ENCODE measurements at regions of chr15 and their contacts with region 1.

Region 1: DNA sequence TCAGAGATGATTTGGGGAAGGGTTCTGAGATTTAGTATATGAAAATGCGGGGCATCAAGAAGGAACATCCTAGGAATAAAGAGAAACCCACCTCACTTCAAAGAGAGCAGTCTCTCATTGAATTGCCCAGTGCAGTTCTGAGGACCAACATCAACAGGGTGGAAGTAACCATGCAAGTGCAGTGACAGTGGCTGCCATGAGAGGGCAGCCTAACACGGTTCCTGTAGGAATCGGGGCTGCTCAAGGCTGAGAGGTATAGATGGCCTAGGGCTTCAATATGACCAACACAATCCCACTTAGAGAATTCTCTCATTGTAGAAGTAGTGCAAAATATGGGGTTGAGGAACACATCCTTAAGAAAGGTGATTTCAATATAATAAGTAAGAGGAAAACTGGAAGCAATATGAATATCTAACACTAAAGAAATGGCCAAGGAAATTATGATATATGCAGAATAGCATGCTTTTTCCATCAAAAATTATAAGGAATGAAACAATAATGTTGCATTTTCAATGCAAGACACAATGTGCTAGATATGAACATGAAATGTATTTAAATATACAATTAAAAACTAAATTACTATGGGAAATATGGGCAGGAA is 51.1 kb upstream of the ARRDC4 start:
- DNase-seq: peak; percentile 18 to 86 (median 70)

Region 2: DNA sequence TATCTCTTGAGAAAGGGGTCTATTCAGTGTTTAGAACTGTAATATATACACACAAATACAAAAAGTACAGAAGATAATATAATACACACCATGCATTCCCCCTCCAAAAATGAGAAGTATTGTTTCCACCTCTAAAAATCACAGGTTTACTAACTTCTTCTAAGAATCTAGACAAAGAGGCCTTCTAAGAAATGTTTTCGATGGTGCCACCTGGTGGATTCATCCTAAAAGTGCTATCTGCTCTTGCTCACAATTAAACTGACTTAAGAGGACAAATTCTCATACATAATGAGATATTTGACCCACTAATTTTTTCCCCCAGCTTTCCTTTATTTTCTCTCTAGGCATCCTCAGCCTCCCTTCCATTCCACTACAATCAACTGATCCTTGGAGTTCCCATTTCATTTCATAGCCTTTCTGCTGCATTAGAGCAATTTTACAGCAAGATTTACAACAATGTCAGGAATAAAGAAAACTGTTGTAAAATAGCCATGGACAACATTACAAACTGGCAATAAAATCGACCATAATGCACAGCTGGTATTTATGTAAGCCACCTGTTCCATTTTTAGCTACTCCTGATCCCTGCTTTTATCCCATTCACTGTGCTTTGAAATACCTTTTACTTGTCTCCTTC is 175.7 kb after region 1 on chr15:
- intact Hi-C with region 1: loop called (anchors 10 kb)
- DNase-seq: peak in 27 of 42 donors; percentile 17 to 80 (median 61)

Region 3: GRCh38 chr15:98103570-98103969 is 194.2 kb after region 1 on chr15:
- intact Hi-C with region 1: no loop called
- DNase-seq: no peak

Region 4: DNA sequence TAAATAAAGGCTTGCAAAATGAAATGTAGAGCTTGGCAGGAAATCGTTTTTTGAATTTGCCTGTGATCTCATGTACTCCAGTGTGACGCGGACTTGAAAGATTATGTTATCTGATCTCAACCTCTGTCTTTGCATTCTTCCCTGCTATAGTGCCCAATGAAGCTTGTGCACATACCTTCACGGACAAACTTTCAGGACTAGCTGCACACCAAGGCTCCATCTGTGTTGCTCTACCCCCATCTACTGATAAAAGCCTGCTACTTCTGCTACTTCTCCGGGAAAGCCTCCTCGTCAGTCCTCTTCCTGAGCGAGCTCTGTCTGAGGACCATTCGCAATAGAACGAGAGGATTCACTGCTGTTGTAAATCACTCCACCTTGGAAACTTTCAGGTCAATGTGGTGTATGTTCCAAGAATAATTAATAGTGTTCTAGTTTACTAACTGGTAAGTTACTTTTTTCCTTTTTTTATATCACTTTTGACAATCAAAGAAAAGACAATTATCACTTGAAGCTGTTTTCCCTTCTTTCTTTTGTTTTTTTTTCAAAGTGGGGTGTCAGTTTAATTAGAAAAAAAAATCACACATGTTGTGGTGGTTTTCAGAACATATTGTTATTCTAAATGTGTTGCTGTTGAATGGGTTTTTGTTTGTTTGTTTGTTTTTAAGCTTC is 268.7 kb after region 1 on chr15:
- intact Hi-C with region 1: loop called (anchors 10 kb)
- DNase-seq: peak in 37 of 42 donors; percentile 6 to 77 (median 46)

Region 5: DNA sequence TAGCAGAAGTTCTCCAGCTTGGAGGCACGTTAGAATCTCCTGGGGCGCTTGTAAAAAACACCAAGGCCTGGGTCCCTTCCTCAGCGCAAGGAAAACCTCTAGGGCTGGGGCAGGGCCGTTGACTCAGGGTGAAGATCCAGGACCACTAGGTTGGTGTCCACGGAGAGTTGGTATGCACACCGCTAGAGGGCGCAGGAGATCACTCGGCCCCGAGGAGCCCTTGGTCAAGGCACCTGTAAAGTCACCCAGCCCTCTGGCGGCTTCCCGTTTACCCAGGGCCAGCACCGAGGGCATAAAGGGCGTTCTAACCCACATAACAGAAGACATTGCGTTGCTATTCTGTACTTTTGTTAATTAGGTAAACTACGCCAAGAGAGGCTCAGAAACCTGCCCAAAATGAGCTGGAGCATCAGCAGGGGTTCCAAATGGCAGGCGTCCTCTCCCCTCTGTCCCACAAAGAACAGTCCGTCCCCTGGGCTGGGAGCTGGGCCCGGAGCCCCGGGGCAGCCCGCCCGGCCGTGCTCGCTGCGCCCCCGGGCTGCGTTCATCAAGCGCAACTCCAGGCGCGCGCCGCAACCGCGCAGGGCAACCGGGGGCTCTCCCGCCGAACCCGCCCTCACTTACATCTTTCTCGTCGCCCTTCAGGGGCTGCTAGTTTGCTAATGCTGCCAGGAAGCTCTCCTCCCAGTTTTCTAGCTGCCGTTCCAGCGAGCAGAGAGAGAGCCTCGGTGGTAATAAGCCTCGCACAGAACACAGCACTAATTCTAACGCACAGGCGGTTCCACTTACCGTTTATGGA is 383.2 kb after region 1 on chr15:
- intact Hi-C with region 1: loop called (anchors 10 kb)
- DNase-seq: peak in 41 of 42 donors; percentile 13 to 83 (median 56)

Measured in head of caudate nucleus (tissue), 42 donors.